ENCODE measurements at regions of chr15 and their contacts with region 1.

Region 1: GRCh38 chr15:58933281-58934113 is at the start of gene SLTM:
- DNase-seq: peak; percentile 88
- H3K4me3 Mint-ChIP-seq: peak within 1 kb of the TSS; percentile 98
- H3K27ac Mint-ChIP-seq: peak within 1 kb of the TSS; percentile 100
- H3K4me1 Mint-ChIP-seq: peaks cover 34% of the 10 kb centered on the region
- H3K27me3 Mint-ChIP-seq: no peaks in the 10 kb centered on the region
- total RNA-seq, gene SLTM: 142 and 143 TPM in 2 replicates

Region 2: DNA sequence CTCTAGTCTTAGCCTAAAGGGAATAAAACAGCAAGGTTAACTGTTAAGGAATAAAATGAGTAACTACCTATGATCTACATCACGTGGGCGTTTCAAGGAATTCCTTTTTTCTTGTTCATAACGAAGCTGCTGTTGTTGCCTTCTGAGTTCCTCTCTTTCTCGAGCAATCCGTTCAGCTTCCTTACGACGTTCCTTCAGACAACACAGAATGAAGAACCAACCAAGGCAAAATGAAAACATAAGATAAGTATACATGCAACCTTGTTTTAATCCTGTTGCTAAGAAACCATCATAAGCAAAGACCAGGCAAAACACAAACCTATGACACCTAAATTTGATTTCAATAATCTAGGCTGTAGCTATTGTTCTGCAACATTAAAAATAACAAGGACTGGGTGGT is 44.1 kb before region 1 on chr15:
- intact Hi-C with region 1: loop called (anchors 5 kb)
- DNase-seq: no peak
- H3K4me3 Mint-ChIP-seq: no peak overlapping the region
- H3K27ac Mint-ChIP-seq: peak overlapping the region; percentile 67
- H3K4me1 Mint-ChIP-seq: peaks cover 15% of the 10 kb centered on the region
- H3K27me3 Mint-ChIP-seq: no peaks in the 10 kb centered on the region

Region 3: DNA sequence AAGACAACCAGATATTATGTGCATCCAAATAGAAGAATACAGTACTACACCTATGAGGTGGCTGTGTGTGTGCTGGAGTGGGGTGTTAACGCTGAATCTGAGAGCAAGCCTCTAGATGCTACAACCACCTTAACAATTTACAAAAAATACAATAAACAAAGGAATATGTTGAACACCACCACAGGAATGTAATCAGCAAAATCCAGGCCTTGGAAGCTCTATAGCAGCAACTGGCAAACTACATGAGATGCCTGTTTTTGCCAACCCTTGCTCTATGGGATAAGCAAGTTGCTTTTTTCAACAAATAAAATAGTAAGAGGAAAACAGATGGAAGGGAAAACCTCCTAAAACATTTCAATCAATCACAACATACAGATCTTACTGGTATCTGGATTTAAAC is 23.9 kb before region 1 on chr15:
- intact Hi-C with region 1: no loop called
- DNase-seq: no peak
- H3K4me3 Mint-ChIP-seq: no peak overlapping the region
- H3K27ac Mint-ChIP-seq: peak overlapping the region; percentile 12
- H3K4me1 Mint-ChIP-seq: peaks cover 52% of the 10 kb centered on the region
- H3K27me3 Mint-ChIP-seq: no peaks in the 10 kb centered on the region

Region 4: DNA sequence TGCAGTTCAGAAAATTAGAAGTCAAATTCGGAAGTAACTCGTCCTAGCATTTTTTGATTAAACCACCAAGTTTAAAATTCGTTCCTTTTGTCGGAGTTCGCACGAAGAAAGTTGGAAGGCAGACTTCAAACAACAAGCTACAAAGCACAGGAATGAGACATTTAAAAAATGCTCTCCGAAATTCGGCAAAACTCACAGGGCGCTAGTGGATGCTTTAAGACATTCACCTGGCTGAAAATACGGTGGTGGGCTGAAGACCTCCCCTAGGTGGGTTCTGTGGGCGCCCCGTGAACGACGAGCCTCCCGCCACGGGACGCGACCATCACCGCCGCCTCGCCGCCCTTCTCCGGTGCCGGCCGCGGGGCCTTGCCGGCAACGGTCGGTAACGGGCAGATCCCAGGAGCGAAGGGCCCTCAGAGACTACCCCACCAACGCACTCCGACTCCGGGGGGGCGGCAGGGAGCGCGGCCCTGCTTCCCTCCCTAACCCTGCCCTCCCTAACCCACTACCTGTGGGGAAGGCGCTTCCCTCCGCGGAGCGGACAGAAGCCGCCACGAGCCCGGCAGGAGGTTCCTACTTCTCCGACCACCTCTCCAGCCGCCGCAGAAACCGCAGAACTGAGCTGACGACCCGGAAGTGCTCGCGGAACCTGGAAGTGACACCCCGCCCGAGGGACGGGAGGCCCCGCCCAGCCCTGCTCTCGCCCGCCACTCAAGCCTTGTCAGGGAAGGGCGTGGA is 723.6 kb after region 1 on chr15 and contains the start of gene GTF2A2:
- intact Hi-C with region 1: loop called (anchors 1 kb)
- DNase-seq: peak; percentile 93
- H3K4me3 Mint-ChIP-seq: no peak within 1 kb of the TSS
- H3K27ac Mint-ChIP-seq: peak within 1 kb of the TSS; percentile 79
- H3K4me1 Mint-ChIP-seq: no peaks in the 10 kb centered on the region
- H3K27me3 Mint-ChIP-seq: no peaks in the 10 kb centered on the region
- total RNA-seq, gene GTF2A2: 189 and 197 TPM in 2 replicates